ENCODE measurements at regions of chr2 and their contacts with region 1.

Region 1: DNA sequence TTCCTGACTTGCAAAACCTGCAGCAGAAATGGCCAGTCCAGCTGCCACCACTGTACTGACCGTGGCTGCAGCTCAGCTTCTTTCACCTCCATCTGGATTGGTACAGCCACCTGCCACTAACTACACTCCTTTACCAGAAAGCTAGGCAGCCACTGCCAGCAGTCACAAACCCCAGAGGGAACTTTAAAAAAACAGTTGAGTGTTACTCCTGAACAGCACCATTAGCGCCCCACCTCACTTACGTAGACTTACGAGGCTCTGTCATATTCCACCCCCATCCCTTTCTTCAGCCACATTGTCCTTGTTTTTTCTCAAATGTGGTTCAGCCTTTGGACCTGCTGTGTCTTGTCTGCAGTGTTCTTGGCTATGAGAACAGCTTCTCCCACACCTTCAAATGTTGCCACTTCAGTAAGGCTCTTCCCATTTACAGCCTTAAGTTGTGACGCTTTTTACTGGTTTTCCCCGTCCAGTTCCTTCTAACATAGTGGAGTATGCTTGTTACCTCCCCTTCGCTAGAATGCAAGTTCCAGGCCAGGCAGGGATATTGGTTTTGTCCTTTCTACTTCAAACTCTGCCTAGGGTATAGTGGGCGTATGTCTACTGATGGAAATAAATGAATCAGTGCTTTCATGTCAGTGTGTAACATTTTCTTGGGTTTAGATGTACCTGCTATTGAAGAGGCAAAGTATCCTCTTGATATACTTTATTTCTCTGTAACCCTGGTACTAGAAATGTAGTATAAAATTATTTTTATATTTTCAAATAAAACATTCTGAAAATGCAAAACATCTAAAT is 17.1 kb downstream of the HNRNPA3 start:
- DNase-seq: no peak
- ATAC-seq: no peak
- H3K4me3 ChIP-seq: no peak overlapping the region
- H3K4me3 Mint-ChIP-seq: no peak overlapping the region
- H3K27ac ChIP-seq: no peak overlapping the region
- H3K27ac Mint-ChIP-seq: peak overlapping the region; percentile 79
- H3K4me1 ChIP-seq: no peaks in the 10 kb centered on the region
- H3K4me1 Mint-ChIP-seq: peaks cover 41% of the 10 kb centered on the region
- H3K27me3 ChIP-seq: no peaks in the 10 kb centered on the region
- H3K27me3 Mint-ChIP-seq: no peaks in the 10 kb centered on the region
- CTCF ChIP-seq: no peak

Region 2: GRCh38 chr2:177204417-177204816 is 25.2 kb before region 1 on chr2:
- CTCF ChIA-PET with region 1: no interaction called
- POLR2A ChIA-PET with region 1: no interaction called
- intact Hi-C with region 1: no loop called
- DNase-seq: no peak
- ATAC-seq: no peak
- H3K4me3 ChIP-seq: no peak overlapping the region
- H3K4me3 Mint-ChIP-seq: no peak overlapping the region
- H3K27ac ChIP-seq: no peak overlapping the region
- H3K27ac Mint-ChIP-seq: no peak overlapping the region
- H3K4me1 ChIP-seq: no peaks in the 10 kb centered on the region
- H3K4me1 Mint-ChIP-seq: peaks cover 2% of the 10 kb centered on the region
- H3K27me3 ChIP-seq: no peaks in the 10 kb centered on the region
- H3K27me3 Mint-ChIP-seq: no peaks in the 10 kb centered on the region
- CTCF ChIP-seq: no peak

Region 3: GRCh38 chr2:177217247-177217843 is 12.3 kb before region 1 on chr2:
- CTCF ChIA-PET with region 1: no interaction called
- POLR2A ChIA-PET with region 1: interaction called, 8 read pairs
- intact Hi-C with region 1: loop called (anchors 2 kb)
- DNase-seq: no peak
- ATAC-seq: no peak
- H3K4me3 ChIP-seq: no peak overlapping the region
- H3K4me3 Mint-ChIP-seq: peak overlapping the region; percentile 37
- H3K27ac ChIP-seq: peak overlapping the region in 1 of 2 experiments; percentile 17
- H3K27ac Mint-ChIP-seq: peak overlapping the region; percentile 81
- H3K4me1 ChIP-seq: peaks cover 60% of the 10 kb centered on the region
- H3K4me1 Mint-ChIP-seq: peaks cover 68% of the 10 kb centered on the region
- H3K27me3 ChIP-seq: no peaks in the 10 kb centered on the region
- H3K27me3 Mint-ChIP-seq: no peaks in the 10 kb centered on the region
- CTCF ChIP-seq: no peak

Region 4: DNA sequence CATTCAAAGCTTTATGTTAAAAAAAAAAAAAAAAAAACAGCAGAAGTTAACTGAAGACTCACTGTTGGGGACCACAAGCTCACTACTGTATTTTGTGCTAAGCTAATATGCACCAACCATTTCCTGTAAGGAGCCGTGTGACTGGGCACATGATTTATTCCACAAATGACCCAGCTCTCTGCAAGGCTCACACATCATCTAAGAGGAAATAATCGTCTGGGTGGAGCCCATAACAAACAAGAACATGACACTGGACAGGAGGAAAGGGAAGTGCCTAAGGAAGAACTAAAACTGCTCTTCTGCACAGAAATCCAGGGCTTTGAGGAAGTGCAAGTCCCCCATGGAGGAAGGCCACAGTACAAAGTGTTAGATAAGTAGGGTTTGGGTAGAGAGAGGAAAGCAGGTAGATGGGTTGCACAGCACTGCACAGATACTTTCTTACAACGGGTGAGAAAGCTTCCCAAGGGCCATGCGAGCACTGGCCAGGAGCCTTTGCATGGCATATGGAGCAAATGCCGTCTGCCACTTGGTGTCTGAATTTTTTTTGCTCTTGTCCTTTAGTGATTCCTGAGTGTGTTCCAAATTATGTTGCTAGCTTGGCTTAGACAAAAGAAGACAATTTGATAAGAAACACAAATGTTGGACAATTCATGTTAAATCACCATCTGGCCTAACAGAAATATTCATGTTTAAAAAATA is 10.4 kb after region 1 on chr2:
- CTCF ChIA-PET with region 1: interaction called, 3 read pairs
- POLR2A ChIA-PET with region 1: interaction called, 16 read pairs
- intact Hi-C with region 1: no loop called
- DNase-seq: peak in 4 of 9 experiments; percentile 27 to 82 (median 58)
- ATAC-seq: peak; percentile 78
- H3K4me3 ChIP-seq: no peak overlapping the region
- H3K4me3 Mint-ChIP-seq: peak overlapping the region; percentile 59
- H3K27ac ChIP-seq: peak overlapping the region; percentile 36 to 80
- H3K27ac Mint-ChIP-seq: peak overlapping the region; percentile 89
- H3K4me1 ChIP-seq: peaks cover 60% of the 10 kb centered on the region
- H3K4me1 Mint-ChIP-seq: peaks cover 84% of the 10 kb centered on the region
- H3K27me3 ChIP-seq: no peaks in the 10 kb centered on the region
- H3K27me3 Mint-ChIP-seq: no peaks in the 10 kb centered on the region
- CTCF ChIP-seq: no peak

Region 5: DNA sequence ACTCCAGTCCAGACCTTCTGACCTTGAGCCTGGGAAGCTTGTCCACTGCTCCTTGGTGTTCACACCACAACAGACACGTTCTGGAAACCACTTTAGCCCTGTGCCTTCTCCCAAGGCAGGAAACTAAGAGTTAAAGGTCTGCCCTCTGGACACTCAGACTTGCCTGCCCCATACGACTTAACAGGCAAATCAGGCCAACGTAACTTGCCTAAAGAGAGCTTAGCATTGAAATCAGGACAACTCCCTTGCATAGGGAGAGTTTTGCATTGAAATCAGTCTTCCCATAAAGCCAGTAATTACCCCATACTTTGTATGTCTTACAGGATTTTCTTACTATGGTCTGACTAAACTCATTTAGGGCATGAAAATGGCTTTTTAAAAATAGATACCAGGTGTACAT is 16.4 kb after region 1 on chr2:
- CTCF ChIA-PET with region 1: interaction called, 4 read pairs
- POLR2A ChIA-PET with region 1: interaction called, 16 read pairs
- intact Hi-C with region 1: loop called in 1 of 2 experiments (anchors 2 kb)
- DNase-seq: no peak
- ATAC-seq: no peak
- H3K4me3 ChIP-seq: no peak overlapping the region
- H3K4me3 Mint-ChIP-seq: no peak overlapping the region
- H3K27ac ChIP-seq: no peak overlapping the region
- H3K27ac Mint-ChIP-seq: no peak overlapping the region
- H3K4me1 ChIP-seq: peaks cover 60% of the 10 kb centered on the region
- H3K4me1 Mint-ChIP-seq: peaks cover 76% of the 10 kb centered on the region
- H3K27me3 ChIP-seq: no peaks in the 10 kb centered on the region
- H3K27me3 Mint-ChIP-seq: no peaks in the 10 kb centered on the region
- CTCF ChIP-seq: no peak

Region 6: GRCh38 chr2:177296040-177296439 is 66.4 kb after region 1 on chr2:
- CTCF ChIA-PET with region 1: no interaction called
- POLR2A ChIA-PET with region 1: no interaction called
- intact Hi-C with region 1: loop called in 1 of 2 experiments (anchors 5 kb)
- DNase-seq: peak in 2 of 9 experiments; percentile 53 to 68
- ATAC-seq: peak; percentile 64
- H3K4me3 ChIP-seq: no peak overlapping the region
- H3K4me3 Mint-ChIP-seq: no peak overlapping the region
- H3K27ac ChIP-seq: no peak overlapping the region
- H3K27ac Mint-ChIP-seq: no peak overlapping the region
- H3K4me1 ChIP-seq: peaks cover 13% of the 10 kb centered on the region
- H3K4me1 Mint-ChIP-seq: peaks cover 7% of the 10 kb centered on the region
- H3K27me3 ChIP-seq: no peaks in the 10 kb centered on the region
- H3K27me3 Mint-ChIP-seq: no peaks in the 10 kb centered on the region
- CTCF ChIP-seq: peak; percentile 63